Posterior vena cava (tissue), 2 donors: ENCODE measurements at regions of chr6 and their contacts with region 1.

Region 1: DNA sequence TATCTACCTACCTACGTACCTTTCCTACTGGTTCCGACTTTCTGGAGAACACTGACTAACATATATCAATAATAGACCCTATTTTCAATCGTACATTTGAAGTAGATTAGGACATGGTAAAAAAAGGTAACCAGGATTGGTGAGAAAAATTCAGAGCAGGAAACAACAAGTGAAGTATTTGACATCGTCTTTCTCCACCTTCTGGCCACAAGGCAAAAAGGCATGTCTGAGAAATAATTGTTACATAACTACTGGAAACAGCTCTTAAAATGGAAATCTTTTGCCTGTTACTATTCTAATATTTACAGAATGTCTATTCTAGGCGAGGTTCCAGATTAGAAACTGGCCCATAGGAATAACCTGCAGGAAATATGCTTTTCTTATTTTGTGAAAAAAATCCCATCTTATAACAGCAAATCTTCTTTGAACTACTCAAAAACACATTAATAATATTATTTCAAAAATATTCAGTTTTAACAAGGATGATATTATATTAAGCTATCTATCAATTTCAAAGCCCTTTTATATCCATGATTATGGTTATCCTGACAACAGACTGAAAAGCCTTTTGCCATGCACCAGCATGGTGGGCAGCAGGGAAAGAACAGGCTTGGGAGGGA is 80.8 kb downstream of the RCAN2 start:
- DNase-seq: no peak

Region 2: DNA sequence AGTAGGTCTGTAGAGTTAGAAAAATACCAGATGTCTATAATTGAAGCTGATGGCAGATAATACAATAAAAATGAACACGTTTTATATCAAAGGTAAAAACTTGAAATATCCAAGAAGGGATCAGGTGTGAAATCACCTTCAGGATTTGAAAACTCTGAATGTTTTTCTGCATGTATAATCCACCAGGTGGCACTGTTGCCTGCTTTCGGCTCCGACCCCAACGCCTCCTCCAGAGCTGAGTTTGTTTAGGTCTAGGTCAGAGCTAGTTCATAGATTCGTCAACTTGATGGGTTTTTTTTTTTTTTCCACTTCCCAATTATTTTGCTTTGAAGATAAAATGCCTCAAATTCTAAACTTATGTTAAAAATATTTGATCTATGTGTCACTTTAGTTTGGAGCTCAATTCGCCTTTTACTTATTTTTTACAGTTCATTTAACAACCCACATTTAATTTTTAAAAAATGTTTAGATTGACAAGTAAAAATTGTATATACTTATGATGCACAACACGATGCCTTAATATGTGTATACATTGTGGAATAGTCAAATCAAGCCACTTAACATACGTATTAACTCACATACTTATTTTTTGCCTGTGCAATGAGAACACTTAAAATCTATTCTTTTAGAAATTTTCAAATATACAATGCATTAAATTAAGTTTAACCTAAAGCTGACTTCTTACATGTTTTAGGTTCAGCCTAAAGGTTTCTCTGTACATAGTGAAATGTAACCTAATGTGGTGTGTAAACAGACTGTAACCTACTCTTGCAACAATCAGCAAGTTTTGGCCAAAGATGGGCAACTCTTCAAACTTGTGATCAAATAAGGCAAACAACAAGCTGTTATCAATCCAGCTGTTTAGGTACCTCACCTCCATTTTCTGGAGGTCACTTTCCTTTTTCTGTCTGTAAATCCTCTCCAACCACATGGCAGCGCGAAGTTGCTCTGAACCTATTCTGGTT is 320.0 kb before region 1 on chr6:
- intact Hi-C with region 1: loop called in 1 of 2 experiments (anchors 5 kb)
- DNase-seq: peak; percentile 80

Region 3: GRCh38 chr6:46221222-46221793 is 189.1 kb before region 1 on chr6:
- intact Hi-C with region 1: loop called in 1 of 2 experiments (anchors 5 kb)
- DNase-seq: no peak